Activated T-helper 2 cell treated with anti-CD3 and anti-CD28 coated beads, Interferon-gamma antibody, Interleukin-2, Interleukin-4, amounts not matched to agents 10 μg/mL and 5 μg/mL and 100 μg/mL, durations not matched to agents 14 hours and 24 hours and 36 hours (primary cell): ENCODE measurements at regions of chr1 and their contacts with region 1.

Region 1: DNA sequence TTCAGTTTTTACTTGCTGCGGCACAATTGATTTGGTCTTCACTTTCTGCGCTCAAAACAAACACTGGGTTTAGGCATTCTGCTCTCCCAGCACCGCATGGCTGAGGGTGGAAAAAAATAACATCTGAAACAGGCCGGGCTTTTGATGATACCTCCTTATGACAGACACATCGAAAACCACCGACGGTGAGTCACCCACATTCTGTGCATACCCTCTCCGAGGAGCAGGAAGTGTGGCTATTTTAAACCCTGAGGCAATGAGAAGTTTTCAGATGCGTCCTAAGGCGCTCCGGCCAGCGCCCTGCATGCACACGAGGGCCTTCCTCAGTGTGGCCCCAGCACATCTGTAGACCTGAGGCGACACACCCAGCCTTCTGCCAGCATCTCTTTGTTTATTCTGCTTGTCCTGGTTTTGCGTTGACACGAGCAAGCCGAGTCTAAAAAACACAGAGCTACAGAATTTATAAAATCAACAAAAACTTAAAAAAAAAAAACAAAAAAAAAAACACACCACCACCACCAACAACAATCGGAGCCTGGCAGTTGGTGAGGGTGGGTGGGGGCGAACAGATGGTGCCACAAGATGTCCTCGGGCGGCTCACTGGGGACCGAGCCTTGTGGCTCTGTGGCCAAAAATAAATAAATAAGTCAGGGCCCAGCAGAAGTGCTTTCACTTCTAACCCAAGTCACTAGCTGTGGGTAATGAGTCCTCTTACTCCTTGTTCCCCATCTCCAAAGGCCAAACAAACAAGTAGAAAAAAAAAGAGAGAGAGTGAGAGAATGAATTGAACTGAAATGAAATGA is 162.6 kb upstream of the IRF2BP2 start:
- DNase-seq: peak; percentile 86
- H3K4me3 Mint-ChIP-seq: peak overlapping the region; percentile 71
- H3K27ac Mint-ChIP-seq: peak overlapping the region; percentile 97
- H3K4me1 Mint-ChIP-seq: peaks cover 58% of the 10 kb centered on the region
- H3K27me3 Mint-ChIP-seq: no peaks in the 10 kb centered on the region

Region 2: DNA sequence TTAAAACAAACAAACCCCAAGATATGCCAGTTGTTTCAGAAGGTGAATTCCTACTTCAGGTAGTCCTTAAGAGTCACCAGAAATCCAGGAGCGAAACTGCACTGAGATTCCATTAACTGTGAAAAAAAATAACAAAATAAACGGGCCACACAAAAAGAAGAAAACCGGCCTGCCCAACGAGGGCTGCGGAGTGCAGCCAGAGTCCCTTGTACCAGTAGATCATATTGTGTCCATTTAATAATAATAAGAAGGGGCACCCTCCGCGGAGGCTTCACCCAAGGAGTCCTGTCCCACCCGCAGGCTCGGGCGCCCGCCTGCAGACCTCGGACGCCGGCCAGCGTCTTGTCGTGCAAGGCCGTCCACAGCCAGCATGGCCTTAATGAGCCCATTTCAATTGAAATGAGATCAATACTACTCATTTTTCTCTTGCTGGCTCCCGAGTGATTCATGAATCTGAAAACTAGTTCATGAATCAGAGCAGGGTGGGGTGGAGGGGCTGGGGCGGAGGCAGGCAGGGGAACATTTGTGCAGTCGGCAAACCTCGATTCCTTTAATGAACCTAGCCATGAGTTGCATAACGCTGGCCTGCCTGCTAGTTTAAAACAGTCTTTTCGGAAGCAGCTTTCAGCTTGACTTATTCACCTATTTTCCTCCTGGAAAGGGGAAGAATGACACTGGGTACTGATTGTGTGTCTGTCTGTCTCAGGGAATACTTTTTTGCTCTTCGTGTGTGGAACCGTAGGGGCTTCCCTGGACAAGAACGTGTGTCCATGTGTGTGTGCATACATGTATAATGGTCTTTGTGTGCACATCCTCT is 49.4 kb before region 1 on chr1:
- intact Hi-C with region 1: loop called (anchors 1 kb)
- DNase-seq: peak; percentile 26
- H3K4me3 Mint-ChIP-seq: peak overlapping the region; percentile 72
- H3K27ac Mint-ChIP-seq: peak overlapping the region; percentile 99
- H3K4me1 Mint-ChIP-seq: peaks cover 73% of the 10 kb centered on the region
- H3K27me3 Mint-ChIP-seq: no peaks in the 10 kb centered on the region

Region 3: GRCh38 chr1:234730770-234731568 is 41.6 kb before region 1 on chr1:
- intact Hi-C with region 1: loop called (anchors 1 kb)
- DNase-seq: peak; percentile 36
- H3K4me3 Mint-ChIP-seq: no peak overlapping the region
- H3K27ac Mint-ChIP-seq: peak overlapping the region; percentile 97
- H3K4me1 Mint-ChIP-seq: peaks cover 74% of the 10 kb centered on the region
- H3K27me3 Mint-ChIP-seq: no peaks in the 10 kb centered on the region

Region 4: DNA sequence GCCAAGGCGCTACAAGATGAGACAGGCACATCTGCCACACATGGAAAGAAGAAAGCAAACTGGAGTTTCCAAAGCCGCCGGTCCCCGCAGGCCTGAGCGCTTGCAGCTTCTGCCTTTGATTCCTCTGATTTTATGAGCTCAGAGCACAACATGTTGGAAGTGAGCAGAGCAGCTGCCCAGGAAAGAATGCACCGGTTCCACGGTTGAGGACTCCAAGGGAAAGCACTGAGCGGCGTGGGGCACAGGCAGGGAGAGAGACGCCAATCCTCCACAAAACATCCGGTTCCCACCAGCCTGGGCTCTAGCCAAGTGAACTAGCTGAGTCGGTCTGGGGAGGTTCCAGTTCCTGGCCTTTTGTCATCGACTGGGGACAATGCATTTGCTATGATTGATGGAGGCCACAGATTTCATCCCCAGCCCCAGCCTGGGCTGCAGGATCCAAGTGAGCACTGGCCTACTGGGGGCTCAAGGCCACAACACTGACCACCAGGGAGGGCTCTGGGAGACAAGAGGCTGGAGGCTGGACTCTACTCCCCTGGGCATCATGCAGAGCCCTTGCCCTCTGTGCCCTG is 90.5 kb after region 1 on chr1:
- intact Hi-C with region 1: loop called (anchors 2 kb)
- DNase-seq: no peak
- H3K4me3 Mint-ChIP-seq: no peak overlapping the region
- H3K27ac Mint-ChIP-seq: no peak overlapping the region
- H3K4me1 Mint-ChIP-seq: peaks cover 30% of the 10 kb centered on the region
- H3K27me3 Mint-ChIP-seq: no peaks in the 10 kb centered on the region

Region 5: DNA sequence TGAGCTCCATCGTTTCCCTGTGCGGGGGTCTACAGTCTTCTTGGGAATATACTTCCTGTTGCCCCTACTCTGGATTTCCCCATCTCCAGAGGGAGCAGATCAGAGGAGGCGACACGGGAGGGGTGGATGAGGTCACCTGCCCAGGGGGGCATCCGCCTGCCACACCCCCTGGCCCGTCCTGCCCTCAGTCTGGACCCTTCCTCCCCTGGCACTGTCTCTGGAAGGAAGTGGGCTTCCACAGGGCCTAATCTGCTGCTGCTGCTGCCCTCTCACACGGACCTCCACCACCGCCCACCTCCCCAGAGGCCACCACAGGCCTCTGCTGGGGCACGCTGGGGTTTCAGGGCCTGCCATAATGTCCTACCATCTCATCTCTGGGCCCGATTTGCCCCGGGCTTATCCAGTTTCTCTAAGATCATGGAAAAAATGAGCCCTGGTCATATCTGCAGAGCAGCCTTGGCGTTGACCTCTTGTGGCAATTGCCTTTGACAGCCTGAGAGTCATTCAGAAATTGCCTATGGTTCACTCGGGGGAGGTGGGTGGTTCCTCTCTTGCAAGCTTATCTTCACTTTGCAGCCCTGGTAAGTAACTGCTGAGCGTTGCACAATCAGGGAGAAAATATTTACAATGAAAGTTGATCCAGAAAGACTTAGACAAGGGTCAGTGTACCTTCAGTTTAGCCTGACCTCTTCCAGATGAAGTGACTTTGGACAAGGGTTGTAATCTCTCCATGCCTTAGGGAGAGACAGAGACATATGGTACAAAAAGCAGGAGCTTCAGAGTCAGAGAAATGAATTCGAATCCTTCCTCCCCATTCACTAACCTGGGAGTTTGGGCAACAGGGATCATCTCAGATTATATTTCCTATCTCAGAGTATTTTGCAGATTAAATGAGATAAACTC is 103.7 kb after region 1 on chr1:
- intact Hi-C with region 1: loop called (anchors 2 kb)
- DNase-seq: no peak
- H3K4me3 Mint-ChIP-seq: no peak overlapping the region
- H3K27ac Mint-ChIP-seq: peak overlapping the region; percentile 88
- H3K4me1 Mint-ChIP-seq: peaks cover 63% of the 10 kb centered on the region
- H3K27me3 Mint-ChIP-seq: no peaks in the 10 kb centered on the region